CD4-positive, alpha-beta memory T cell (primary cell): ENCODE measurements at regions of chr10 and their contacts with region 1.

Region 1: GRCh38 chr10:112949875-112950507 is at the start of gene TCF7L2:
- DNase-seq: peak; percentile 46 to 78 (median 57)
- H3K4me3 ChIP-seq: peak within 1 kb of the TSS; percentile 57 to 63
- H3K4me3 Mint-ChIP-seq: peak within 1 kb of the TSS; percentile 94 to 100 (median 96)
- H3K27ac ChIP-seq: peak within 1 kb of the TSS; percentile 6
- H3K27ac Mint-ChIP-seq: peak within 1 kb of the TSS; percentile 84 to 97 (median 92)
- H3K4me1 ChIP-seq: peaks cover 24% of the 10 kb centered on the region
- H3K4me1 Mint-ChIP-seq: peaks cover 14 to 45% (median 15%) of the 10 kb centered on the region in 4 donors
- H3K27me3 ChIP-seq: peaks cover 9% of the 10 kb centered on the region
- H3K27me3 Mint-ChIP-seq: peaks cover 14 to 15% of the 10 kb centered on the region in 2 donors
- total RNA-seq, gene TCF7L2: 2.3 to 3.2 TPM

Region 2: DNA sequence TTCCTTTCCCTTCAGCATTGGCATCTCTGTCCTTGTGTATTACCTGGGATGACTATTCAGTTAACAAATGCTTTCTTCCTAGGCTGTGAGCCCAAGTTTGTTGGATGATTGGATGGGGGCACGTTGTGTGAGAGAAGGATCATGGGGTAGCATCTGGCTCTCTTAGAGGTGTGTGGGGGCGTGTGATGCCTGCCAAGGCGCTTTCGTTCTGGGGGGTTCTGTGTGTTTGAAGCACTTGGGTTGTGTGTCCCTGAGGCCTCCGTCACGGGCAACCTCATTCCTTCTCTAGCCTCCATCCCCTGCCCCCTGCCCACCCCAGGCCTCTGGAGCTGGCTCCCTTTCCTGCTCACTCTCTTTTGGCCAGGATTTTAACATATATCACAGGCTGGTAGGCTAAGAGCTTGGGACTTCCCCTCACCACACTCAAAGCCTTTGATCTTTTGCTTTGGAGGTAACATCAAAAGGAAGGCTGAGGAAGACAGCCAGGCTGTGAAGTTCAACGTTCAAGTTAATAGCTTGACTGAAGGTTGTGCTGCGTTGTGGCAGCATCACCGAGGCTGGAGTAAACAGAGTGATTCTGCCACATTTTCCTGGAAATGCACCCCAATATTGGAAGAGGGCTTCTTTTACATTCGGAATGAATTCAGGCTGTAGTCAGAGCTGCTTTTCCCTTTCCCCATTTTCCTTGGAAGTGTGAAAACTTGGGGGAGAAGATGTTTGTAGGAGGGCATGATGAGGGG is 57.2 kb after region 1 on chr10:
- CTCF ChIA-PET with region 1: interaction called, 3 read pairs
- POLR2A ChIA-PET with region 1: no interaction called
- intact Hi-C with region 1: loop called (anchors 2 kb)
- DNase-seq: peak; percentile 61 to 77 (median 73)
- H3K4me3 ChIP-seq: peak overlapping the region in 1 of 2 donors; percentile 34
- H3K4me3 Mint-ChIP-seq: peak overlapping the region; percentile 72 to 86 (median 78)
- H3K27ac ChIP-seq: no peak overlapping the region
- H3K27ac Mint-ChIP-seq: peak overlapping the region; percentile 36 to 72 (median 61)
- H3K4me1 ChIP-seq: peaks cover 29% of the 10 kb centered on the region
- H3K4me1 Mint-ChIP-seq: peaks cover 25 to 43% (median 31%) of the 10 kb centered on the region in 4 donors
- H3K27me3 ChIP-seq: peaks cover 4% of the 10 kb centered on the region
- H3K27me3 Mint-ChIP-seq: peaks cover 32 to 38% of the 10 kb centered on the region in 2 donors